Activated naive CD4-positive, alpha-beta T cell treated with anti-CD3 and anti-CD28 coated beads for 36 hours (primary cell): ENCODE measurements at regions of chr21 and their contacts with region 1.

Region 1: GRCh38 chr21:45287438-45288391 is at the start of gene POFUT2:
- DNase-seq: peak; percentile 98
- H3K4me3 Mint-ChIP-seq: peak within 1 kb of the TSS; percentile 76
- H3K27ac Mint-ChIP-seq: no peak within 1 kb of the TSS
- H3K4me1 Mint-ChIP-seq: peaks cover 13% of the 10 kb centered on the region
- H3K27me3 Mint-ChIP-seq: no peaks in the 10 kb centered on the region
- total RNA-seq, gene POFUT2: 14.4 to 15.9 TPM

Region 2: GRCh38 chr21:44958471-44959191 is 329.1 kb before region 1 on chr21:
- CTCF ChIA-PET with region 1: no interaction called
- intact Hi-C with region 1: no loop called
- DNase-seq: no peak
- H3K4me3 Mint-ChIP-seq: no peak overlapping the region
- H3K27ac Mint-ChIP-seq: no peak overlapping the region
- H3K4me1 Mint-ChIP-seq: peaks cover 4% of the 10 kb centered on the region
- H3K27me3 Mint-ChIP-seq: no peaks in the 10 kb centered on the region

Region 3: GRCh38 chr21:45152265-45152746 is 135.4 kb before region 1 on chr21:
- CTCF ChIA-PET with region 1: no interaction called
- intact Hi-C with region 1: loop called (anchors 1 kb)
- DNase-seq: peak; percentile 79
- H3K4me3 Mint-ChIP-seq: peak overlapping the region; percentile 50
- H3K27ac Mint-ChIP-seq: no peak overlapping the region
- H3K4me1 Mint-ChIP-seq: peaks cover 32% of the 10 kb centered on the region
- H3K27me3 Mint-ChIP-seq: no peaks in the 10 kb centered on the region

Region 4: GRCh38 chr21:45309069-45309986 is 21.6 kb after region 1 on chr21:
- CTCF ChIA-PET with region 1: interaction called, 5 read pairs
- intact Hi-C with region 1: loop called (anchors 1 kb)
- DNase-seq: peak; percentile 62
- H3K4me3 Mint-ChIP-seq: no peak overlapping the region
- H3K27ac Mint-ChIP-seq: peak overlapping the region; percentile 25
- H3K4me1 Mint-ChIP-seq: peaks cover 10% of the 10 kb centered on the region
- H3K27me3 Mint-ChIP-seq: no peaks in the 10 kb centered on the region

Region 5: GRCh38 chr21:45357436-45358260 is 69.9 kb after region 1 on chr21:
- CTCF ChIA-PET with region 1: no interaction called
- intact Hi-C with region 1: loop called (anchors 5 kb)
- DNase-seq: no peak
- H3K4me3 Mint-ChIP-seq: no peak overlapping the region
- H3K27ac Mint-ChIP-seq: no peak overlapping the region
- H3K4me1 Mint-ChIP-seq: peaks cover 4% of the 10 kb centered on the region
- H3K27me3 Mint-ChIP-seq: peaks cover 10% of the 10 kb centered on the region

Region 6: GRCh38 chr21:45372732-45373355 is 85.1 kb after region 1 on chr21:
- CTCF ChIA-PET with region 1: no interaction called
- intact Hi-C with region 1: no loop called
- DNase-seq: no peak
- H3K4me3 Mint-ChIP-seq: no peak overlapping the region
- H3K27ac Mint-ChIP-seq: no peak overlapping the region
- H3K4me1 Mint-ChIP-seq: peaks cover 7% of the 10 kb centered on the region
- H3K27me3 Mint-ChIP-seq: peaks cover 6% of the 10 kb centered on the region

Region 7: GRCh38 chr21:45439161-45439872 is 151.6 kb after region 1 on chr21:
- CTCF ChIA-PET with region 1: interaction called, 13 read pairs
- intact Hi-C with region 1: loop called (anchors 1 kb)
- DNase-seq: peak; percentile 90
- H3K4me3 Mint-ChIP-seq: peak overlapping the region; percentile 50
- H3K27ac Mint-ChIP-seq: no peak overlapping the region
- H3K4me1 Mint-ChIP-seq: peaks cover 3% of the 10 kb centered on the region
- H3K27me3 Mint-ChIP-seq: no peaks in the 10 kb centered on the region

Region 8: DNA sequence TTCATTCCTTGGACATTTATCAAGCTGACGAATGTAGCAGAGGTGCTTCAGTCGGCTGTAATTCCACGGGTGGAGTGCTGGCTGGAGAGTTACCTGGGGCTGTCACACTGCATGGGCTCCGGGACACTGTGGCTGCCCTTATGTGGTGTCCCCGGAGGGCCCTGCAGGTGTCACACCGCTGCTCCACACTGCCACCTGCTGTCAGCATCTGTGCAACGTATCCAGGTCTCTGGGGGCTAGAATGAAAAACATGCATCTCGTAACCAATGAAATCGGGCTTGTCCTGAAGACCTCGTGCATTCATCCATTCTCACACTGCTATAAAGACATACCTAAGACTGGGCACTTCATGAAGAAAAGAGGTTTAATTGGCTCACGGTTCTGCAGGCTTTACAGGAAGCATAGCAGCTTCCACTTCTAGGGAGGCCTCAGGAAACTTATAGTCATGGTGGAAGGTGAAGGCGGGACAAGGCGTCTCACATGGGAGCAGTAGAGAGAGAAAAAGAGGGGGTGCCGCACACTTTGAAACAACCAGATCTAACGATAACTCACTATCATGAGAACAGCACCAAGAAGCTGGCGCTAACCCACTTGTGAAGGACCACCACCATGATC is 309.1 kb after region 1 on chr21:
- CTCF ChIA-PET with region 1: no interaction called
- intact Hi-C with region 1: loop called (anchors 1 kb)
- DNase-seq: peak; percentile 92
- H3K4me3 Mint-ChIP-seq: no peak overlapping the region
- H3K27ac Mint-ChIP-seq: no peak overlapping the region
- H3K4me1 Mint-ChIP-seq: peaks cover 28% of the 10 kb centered on the region
- H3K27me3 Mint-ChIP-seq: no peaks in the 10 kb centered on the region